ENCODE measurements at regions of chr1 and their contacts with region 1.

Region 1: DNA sequence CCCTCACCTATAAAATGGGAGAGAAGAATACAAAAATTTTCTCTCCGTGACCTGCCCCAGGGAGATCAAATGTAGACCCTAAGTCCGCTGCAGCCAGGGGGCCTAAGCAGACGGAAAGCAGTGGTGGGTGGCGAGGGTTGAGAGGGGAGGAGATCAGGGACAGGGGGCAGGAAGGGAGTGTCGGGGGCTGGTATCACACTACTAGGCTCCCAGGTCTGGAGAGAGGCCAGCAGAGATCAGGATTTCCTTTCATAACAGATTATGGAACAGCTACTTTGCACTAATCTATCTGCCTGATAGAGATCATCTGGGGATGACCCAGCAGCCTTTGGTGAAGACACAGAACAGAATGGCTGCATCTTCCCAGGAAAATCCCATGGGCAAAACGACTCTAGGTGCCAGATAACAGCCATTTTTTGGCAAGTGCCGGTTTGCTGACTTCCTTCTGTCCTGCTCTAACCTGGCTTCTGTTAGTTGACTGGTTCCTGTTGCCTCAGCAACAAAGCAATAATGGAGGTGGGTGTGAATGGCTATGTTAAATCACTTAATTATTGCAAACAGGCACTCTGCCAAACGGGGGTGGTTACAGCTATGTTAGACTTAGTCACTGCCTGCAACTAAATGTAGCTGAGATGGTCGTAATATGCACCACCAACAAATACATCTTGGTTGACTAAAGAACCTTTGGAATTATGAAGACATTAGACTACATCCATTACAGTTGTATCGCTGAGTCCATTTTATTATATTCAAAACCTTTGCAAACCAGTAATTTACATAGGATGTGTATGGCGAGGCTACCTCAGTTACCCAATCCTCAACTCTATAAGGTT is 30.0 kb upstream of the EPS8L3 start:
- DNase-seq: no peak
- H3K4me3 ChIP-seq: no peak overlapping the region
- H3K27ac ChIP-seq: no peak overlapping the region
- H3K4me1 ChIP-seq: peaks cover 43% of the 10 kb centered on the region
- H3K27me3 ChIP-seq: no peaks in the 10 kb centered on the region
- CTCF ChIP-seq: no peak
- POLR2A ChIP-seq: no peak

Region 2: DNA sequence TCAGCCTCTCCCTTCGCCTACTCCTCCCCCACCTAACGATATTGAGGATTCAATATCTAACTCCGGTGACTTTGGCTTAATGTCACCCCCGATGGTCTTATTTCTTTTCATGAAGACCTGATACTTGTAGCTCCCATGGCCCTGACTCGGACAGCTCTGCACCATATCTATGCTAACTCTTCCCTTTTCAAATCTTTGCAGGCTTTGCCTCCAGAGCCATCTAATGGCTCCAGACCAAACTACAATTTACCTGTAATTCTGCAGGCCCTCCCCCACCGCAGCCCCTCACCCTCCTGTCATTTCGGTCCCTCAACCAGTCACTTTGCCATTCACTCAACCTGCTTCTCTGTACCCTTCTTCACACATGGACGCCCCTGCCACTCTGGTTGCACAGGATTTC is 89.5 kb before region 1 on chr1:
- intact Hi-C with region 1: no loop called
- DNase-seq: peak in 1 of 2 donors; percentile 64
- H3K4me3 ChIP-seq: no peak overlapping the region
- H3K27ac ChIP-seq: no peak overlapping the region
- H3K4me1 ChIP-seq: no peaks in the 10 kb centered on the region
- H3K27me3 ChIP-seq: no peaks in the 10 kb centered on the region
- CTCF ChIP-seq: no peak
- POLR2A ChIP-seq: no peak

Region 3: DNA sequence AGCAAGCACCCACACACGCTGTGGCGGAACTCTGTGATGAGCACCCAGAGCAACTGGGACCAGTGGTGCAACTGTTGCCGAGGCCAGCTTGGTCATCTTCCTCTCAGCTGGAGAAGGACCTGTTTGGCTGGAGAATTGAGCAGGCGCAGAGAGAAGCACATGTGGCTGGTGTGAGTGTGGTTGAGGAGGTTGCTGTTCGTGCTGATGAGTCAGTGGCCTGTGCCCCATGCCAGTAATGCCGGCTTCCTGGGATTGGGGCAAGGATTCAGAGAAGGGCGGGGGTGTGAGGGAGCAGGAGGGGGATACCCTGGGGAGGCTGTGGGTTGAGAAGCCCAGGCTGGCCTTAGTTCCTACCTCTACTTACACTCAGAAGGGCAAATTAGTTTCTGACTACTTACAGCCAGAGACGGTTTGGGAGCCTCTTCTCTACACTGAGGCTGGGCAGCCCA is 27.5 kb after region 1 on chr1:
- intact Hi-C with region 1: loop called (anchors 1 kb)
- DNase-seq: peak; percentile 96
- H3K4me3 ChIP-seq: no peak overlapping the region
- H3K27ac ChIP-seq: peak overlapping the region; percentile 76
- H3K4me1 ChIP-seq: peaks cover 52% of the 10 kb centered on the region
- H3K27me3 ChIP-seq: no peaks in the 10 kb centered on the region
- CTCF ChIP-seq: no peak
- POLR2A ChIP-seq: no peak